GM10248 (cell line): ENCODE measurements at regions of chr19 and their contacts with region 1.

Region 1: GRCh38 chr19:41206926-41207750 is 11.9 kb upstream of the AXL start:
- DNase-seq: no peak
- CTCF ChIP-seq: no peak

Region 2: DNA sequence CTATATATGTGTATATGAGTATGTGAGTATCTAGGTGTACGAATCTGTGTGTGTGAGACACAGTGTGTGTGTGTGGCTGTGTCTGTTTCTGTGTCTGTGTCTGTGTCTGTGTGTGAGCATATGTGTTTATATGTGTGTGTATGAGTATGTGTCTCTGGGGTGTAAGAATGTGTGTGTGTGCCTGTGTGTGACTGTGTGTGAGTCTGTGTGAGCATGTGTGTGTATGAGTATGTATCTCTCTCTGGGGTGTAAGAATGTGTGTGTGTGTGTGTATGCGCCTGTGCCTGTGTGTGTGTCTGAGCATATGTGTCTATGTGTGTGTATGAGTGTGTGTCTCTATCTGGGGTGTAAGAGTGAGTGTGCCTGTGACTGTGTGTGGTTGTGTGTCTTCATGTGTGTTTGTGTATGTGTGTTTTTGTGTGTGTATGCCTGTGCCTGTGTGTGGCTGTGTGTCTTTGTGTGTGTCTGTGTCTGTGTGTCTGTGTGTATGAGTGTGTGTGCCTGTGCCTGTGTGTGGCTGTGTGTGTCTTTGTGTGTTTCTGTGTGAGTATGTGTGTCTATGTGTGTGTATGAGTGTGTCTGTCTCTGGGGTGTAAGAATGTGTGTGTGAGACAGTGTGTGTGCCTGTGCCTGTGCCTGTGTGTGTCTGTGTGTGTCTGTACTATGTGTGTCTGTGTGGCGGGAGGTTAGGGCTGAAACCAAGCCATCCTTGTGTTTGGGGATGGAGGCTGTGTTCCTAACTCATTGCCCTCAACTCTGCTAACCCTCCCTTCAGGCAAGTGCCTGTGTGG is 23.1 kb after region 1 on chr19:
- CTCF ChIA-PET with region 1: interaction called, 10 read pairs
- POLR2A ChIA-PET with region 1: no interaction called
- DNase-seq: no peak
- CTCF ChIP-seq: no peak

Region 3: GRCh38 chr19:41263850-41264580 is 56.9 kb after region 1 on chr19 and contains the start of gene HNRNPUL1:
- CTCF ChIA-PET with region 1: interaction called, 18 read pairs
- POLR2A ChIA-PET with region 1: no interaction called
- DNase-seq: peak; percentile 99
- CTCF ChIP-seq: peak; percentile 23

Region 4: GRCh38 chr19:41298348-41298964 is 91.3 kb after region 1 on chr19:
- CTCF ChIA-PET with region 1: interaction called, 10 read pairs
- POLR2A ChIA-PET with region 1: no interaction called
- DNase-seq: no peak
- CTCF ChIP-seq: no peak

Region 5: GRCh38 chr19:41426952-41427646 is 220.0 kb after region 1 on chr19 and contains the start of gene B3GNT8:
- CTCF ChIA-PET with region 1: interaction called, 10 read pairs
- POLR2A ChIA-PET with region 1: no interaction called
- DNase-seq: peak; percentile 86
- CTCF ChIP-seq: no peak

Region 6: GRCh38 chr19:41501854-41502253 is 294.7 kb after region 1 on chr19:
- CTCF ChIA-PET with region 1: no interaction called
- POLR2A ChIA-PET with region 1: no interaction called
- DNase-seq: no peak
- CTCF ChIP-seq: no peak